Naive thymus-derived CD4-positive, alpha-beta T cell (primary cell): ENCODE measurements at regions of chr9 and their contacts with region 1.

Region 1: GRCh38 chr9:89318123-89319014 is at the start of gene SECISBP2:
- DNase-seq: peak; percentile 90 to 97 (median 93)
- ATAC-seq: peak; percentile 94
- H3K4me3 ChIP-seq: peak within 1 kb of the TSS; percentile 78
- H3K4me3 Mint-ChIP-seq: peak within 1 kb of the TSS; percentile 83 to 96 (median 92)
- H3K27ac ChIP-seq: peak within 1 kb of the TSS; percentile 99
- H3K27ac Mint-ChIP-seq: peak within 1 kb of the TSS; percentile 92 to 99 (median 98)
- H3K4me1 ChIP-seq: peaks cover 25 to 36% of the 10 kb centered on the region in 2 donors
- H3K4me1 Mint-ChIP-seq: peaks cover 24 to 74% (median 56%) of the 10 kb centered on the region in 7 donors
- H3K27me3 ChIP-seq: no peaks in the 10 kb centered on the region
- H3K27me3 Mint-ChIP-seq: no peaks in the 10 kb centered on the region
- total RNA-seq, gene SECISBP2: 55.0 to 130 (median 109) TPM

Region 2: GRCh38 chr9:87973730-87974292 is 1344.6 kb before region 1 on chr9:
- CTCF ChIA-PET with region 1: no interaction called
- POLR2A ChIA-PET with region 1: no interaction called
- intact Hi-C with region 1: loop called in 1 of 2 experiments (anchors 2 kb)
- DNase-seq: peak in 1 of 9 donors; percentile 17
- ATAC-seq: no peak
- H3K4me3 ChIP-seq: peak overlapping the region; percentile 96
- H3K4me3 Mint-ChIP-seq: peak overlapping the region; percentile 87 to 99 (median 95)
- H3K27ac ChIP-seq: peak overlapping the region; percentile 77
- H3K27ac Mint-ChIP-seq: peak overlapping the region; percentile 95 to 99 (median 97)
- H3K4me1 ChIP-seq: peaks cover 0 to 10% of the 10 kb centered on the region in 2 donors
- H3K4me1 Mint-ChIP-seq: peaks cover 13 to 36% (median 32%) of the 10 kb centered on the region in 7 donors
- H3K27me3 ChIP-seq: no peaks in the 10 kb centered on the region
- H3K27me3 Mint-ChIP-seq: peaks cover 0 to 3% (median 0%) of the 10 kb centered on the region in 5 donors

Region 3: GRCh38 chr9:88922031-88922430 is 396.3 kb before region 1 on chr9:
- CTCF ChIA-PET with region 1: no interaction called
- POLR2A ChIA-PET with region 1: no interaction called
- intact Hi-C with region 1: loop called in 1 of 2 experiments (anchors 2 kb)
- DNase-seq: peak in 7 of 9 donors; percentile 62 to 82 (median 75)
- ATAC-seq: peak; percentile 70
- H3K4me3 ChIP-seq: peak overlapping the region; percentile 26
- H3K4me3 Mint-ChIP-seq: peak overlapping the region; percentile 46 to 86 (median 76)
- H3K27ac ChIP-seq: no peak overlapping the region
- H3K27ac Mint-ChIP-seq: peak overlapping the region in 8 of 9 donors; percentile 25 to 88 (median 60)
- H3K4me1 ChIP-seq: peaks cover 28 to 39% of the 10 kb centered on the region in 2 donors
- H3K4me1 Mint-ChIP-seq: peaks cover 20 to 67% (median 55%) of the 10 kb centered on the region in 7 donors
- H3K27me3 ChIP-seq: no peaks in the 10 kb centered on the region
- H3K27me3 Mint-ChIP-seq: peaks cover 0 to 31% (median 0%) of the 10 kb centered on the region in 5 donors

Region 4: GRCh38 chr9:89410641-89411350 is 92.4 kb after region 1 on chr9:
- CTCF ChIA-PET with region 1: no interaction called
- POLR2A ChIA-PET with region 1: interaction called, 6 read pairs
- intact Hi-C with region 1: loop called in 1 of 2 experiments (anchors 5 kb)
- DNase-seq: peak in 2 of 9 donors; percentile 29 to 60
- ATAC-seq: peak; percentile 37
- H3K4me3 ChIP-seq: no peak overlapping the region
- H3K4me3 Mint-ChIP-seq: peak overlapping the region in 9 of 10 donors; percentile 7 to 85 (median 54)
- H3K27ac ChIP-seq: peak overlapping the region; percentile 20
- H3K27ac Mint-ChIP-seq: peak overlapping the region; percentile 67 to 93 (median 84)
- H3K4me1 ChIP-seq: peaks cover 57 to 62% of the 10 kb centered on the region in 2 donors
- H3K4me1 Mint-ChIP-seq: peaks cover 56 to 100% (median 93%) of the 10 kb centered on the region in 7 donors
- H3K27me3 ChIP-seq: no peaks in the 10 kb centered on the region
- H3K27me3 Mint-ChIP-seq: no peaks in the 10 kb centered on the region

Region 5: GRCh38 chr9:89483592-89484522 is 165.5 kb after region 1 on chr9:
- CTCF ChIA-PET with region 1: no interaction called
- POLR2A ChIA-PET with region 1: no interaction called
- intact Hi-C with region 1: loop called in 1 of 2 experiments (anchors 5 kb)
- DNase-seq: peak; percentile 41 to 76 (median 66)
- ATAC-seq: peak; percentile 84
- H3K4me3 ChIP-seq: peak overlapping the region; percentile 48
- H3K4me3 Mint-ChIP-seq: peak overlapping the region; percentile 85 to 100 (median 90)
- H3K27ac ChIP-seq: peak overlapping the region; percentile 68
- H3K27ac Mint-ChIP-seq: peak overlapping the region; percentile 88 to 99 (median 93)
- H3K4me1 ChIP-seq: peaks cover 67 to 71% of the 10 kb centered on the region in 2 donors
- H3K4me1 Mint-ChIP-seq: peaks cover 70 to 96% (median 90%) of the 10 kb centered on the region in 7 donors
- H3K27me3 ChIP-seq: no peaks in the 10 kb centered on the region
- H3K27me3 Mint-ChIP-seq: no peaks in the 10 kb centered on the region

Region 6: GRCh38 chr9:89536145-89536574 is 217.8 kb after region 1 on chr9:
- CTCF ChIA-PET with region 1: no interaction called
- POLR2A ChIA-PET with region 1: interaction called, 3 read pairs
- intact Hi-C with region 1: loop called in 1 of 2 experiments (anchors 1 kb)
- DNase-seq: peak in 7 of 9 donors; percentile 51 to 79 (median 73)
- ATAC-seq: peak; percentile 81
- H3K4me3 ChIP-seq: peak overlapping the region; percentile 11
- H3K4me3 Mint-ChIP-seq: peak overlapping the region; percentile 67 to 83 (median 75)
- H3K27ac ChIP-seq: peak overlapping the region; percentile 71
- H3K27ac Mint-ChIP-seq: peak overlapping the region; percentile 69 to 100 (median 92)
- H3K4me1 ChIP-seq: peaks cover 82 to 93% of the 10 kb centered on the region in 2 donors
- H3K4me1 Mint-ChIP-seq: peaks cover 72 to 97% (median 95%) of the 10 kb centered on the region in 7 donors
- H3K27me3 ChIP-seq: no peaks in the 10 kb centered on the region
- H3K27me3 Mint-ChIP-seq: no peaks in the 10 kb centered on the region

Region 7: DNA sequence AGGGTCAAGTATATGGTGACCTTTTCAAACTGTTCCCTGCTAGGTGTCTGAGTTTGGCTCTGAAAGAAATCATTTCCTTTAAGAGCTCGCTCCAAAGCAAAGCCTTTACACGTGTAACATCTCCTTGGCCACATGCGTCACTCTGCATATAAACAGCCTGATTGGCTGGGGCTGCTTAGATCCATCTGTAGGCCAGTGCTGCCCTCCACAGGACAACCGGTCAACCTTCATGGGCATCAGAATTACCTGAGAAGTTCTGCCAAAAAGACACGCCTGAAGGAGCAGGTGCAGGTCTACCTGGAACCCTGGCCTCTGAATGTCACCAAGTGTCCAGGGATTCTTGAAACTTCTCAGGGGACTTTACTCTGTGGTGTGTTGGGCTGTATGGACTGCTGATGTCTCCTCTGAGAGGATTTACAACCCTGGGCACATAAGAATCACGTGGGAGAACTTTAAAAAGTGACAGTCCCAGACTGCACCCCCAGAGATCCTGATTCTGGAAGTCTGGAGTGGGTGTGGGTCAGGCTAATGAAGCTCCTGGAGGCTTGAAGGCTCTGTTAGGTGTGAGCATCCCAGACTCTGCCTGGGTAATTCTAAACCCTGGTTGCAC is 784.0 kb after region 1 on chr9:
- CTCF ChIA-PET with region 1: no interaction called
- POLR2A ChIA-PET with region 1: no interaction called
- intact Hi-C with region 1: loop called (anchors 1 to 2 kb)
- DNase-seq: peak; percentile 41 to 88 (median 79)
- ATAC-seq: peak; percentile 100
- H3K4me3 ChIP-seq: no peak overlapping the region
- H3K4me3 Mint-ChIP-seq: no peak overlapping the region
- H3K27ac ChIP-seq: no peak overlapping the region
- H3K27ac Mint-ChIP-seq: peak overlapping the region in 1 of 9 donors; percentile 40
- H3K4me1 ChIP-seq: peaks cover 0 to 6% of the 10 kb centered on the region in 2 donors
- H3K4me1 Mint-ChIP-seq: peaks cover 0 to 11% (median 6%) of the 10 kb centered on the region in 7 donors
- H3K27me3 ChIP-seq: no peaks in the 10 kb centered on the region
- H3K27me3 Mint-ChIP-seq: peaks cover 0 to 16% (median 0%) of the 10 kb centered on the region in 5 donors